GM10248 (cell line): ENCODE measurements at regions of chr9 and their contacts with region 1.

Region 1: GRCh38 chr9:20622330-20623020 is at the start of gene MLLT3:
- DNase-seq: peak; percentile 95
- CTCF ChIP-seq: no peak

Region 2: GRCh38 chr9:20356403-20357035 is 266.0 kb before region 1 on chr9:
- CTCF ChIA-PET with region 1: interaction called, 10 read pairs
- POLR2A ChIA-PET with region 1: no interaction called
- DNase-seq: peak; percentile 54
- CTCF ChIP-seq: peak; percentile 75

Region 3: DNA sequence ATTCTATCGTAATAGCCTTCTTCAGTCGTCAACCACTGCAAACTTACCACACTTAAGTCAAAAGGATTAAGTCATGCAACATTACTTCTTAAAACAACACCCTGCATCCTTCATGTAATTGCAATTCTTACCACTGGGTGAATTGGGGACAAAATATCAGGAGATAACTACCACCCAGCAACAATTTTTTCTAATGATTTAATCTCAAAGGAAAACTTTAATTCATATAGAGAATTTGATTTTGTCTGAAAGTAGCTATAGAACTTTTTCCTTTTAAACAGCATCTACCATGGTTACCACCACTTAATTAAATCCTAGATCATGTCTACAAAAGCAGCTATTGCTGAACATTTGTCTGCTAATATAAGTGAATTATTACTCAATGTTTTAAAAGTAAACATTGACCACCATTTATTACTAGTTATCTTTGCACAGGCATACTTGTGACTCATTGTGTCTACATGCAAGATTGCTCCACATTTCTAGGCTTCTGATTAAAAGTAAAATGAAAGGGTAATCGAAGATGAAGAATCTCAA is 10.7 kb before region 1 on chr9:
- CTCF ChIA-PET with region 1: interaction called, 18 read pairs
- POLR2A ChIA-PET with region 1: no interaction called
- DNase-seq: no peak
- CTCF ChIP-seq: no peak

Region 4: GRCh38 chr9:20649381-20649780 is 26.9 kb after region 1 on chr9:
- CTCF ChIA-PET with region 1: interaction called, 11 read pairs
- POLR2A ChIA-PET with region 1: no interaction called
- DNase-seq: no peak
- CTCF ChIP-seq: no peak

Region 5: GRCh38 chr9:20684035-20684872 is 61.8 kb after region 1 on chr9 and contains the start of gene FOCAD:
- CTCF ChIA-PET with region 1: interaction called, 15 read pairs
- POLR2A ChIA-PET with region 1: interaction called, 13 read pairs
- DNase-seq: peak; percentile 98
- CTCF ChIP-seq: no peak

Region 6: GRCh38 chr9:20811872-20812271 is 189.4 kb after region 1 on chr9:
- CTCF ChIA-PET with region 1: no interaction called
- POLR2A ChIA-PET with region 1: no interaction called
- DNase-seq: no peak
- CTCF ChIP-seq: no peak

Region 7: GRCh38 chr9:20941174-20941690 is 318.8 kb after region 1 on chr9:
- CTCF ChIA-PET with region 1: interaction called, 110 read pairs
- POLR2A ChIA-PET with region 1: no interaction called
- DNase-seq: peak; percentile 60
- CTCF ChIP-seq: peak; percentile 72

Region 8: GRCh38 chr9:21110708-21111576 is 488.5 kb after region 1 on chr9:
- CTCF ChIA-PET with region 1: interaction called, 29 read pairs
- POLR2A ChIA-PET with region 1: no interaction called
- DNase-seq: peak; percentile 42
- CTCF ChIP-seq: peak; percentile 72